Activated CD8-positive, alpha-beta T cell treated with anti-CD3 and anti-CD28 coated beads, Interleukin-2, amount 10 ng/mL, durations not matched to agents 7 days and 5 days (primary cell): ENCODE measurements at regions of chr1 and their contacts with region 1.

Region 1: GRCh38 chr1:236759252-236759859 is 35.7 kb upstream of the MTR start:
- DNase-seq: peak; percentile 39
- ATAC-seq: peak; percentile 63
- H3K4me3 Mint-ChIP-seq: no peak overlapping the region
- H3K27ac Mint-ChIP-seq: no peak overlapping the region
- H3K4me1 Mint-ChIP-seq: peaks cover 1% of the 10 kb centered on the region
- H3K27me3 Mint-ChIP-seq: no peaks in the 10 kb centered on the region

Region 2: DNA sequence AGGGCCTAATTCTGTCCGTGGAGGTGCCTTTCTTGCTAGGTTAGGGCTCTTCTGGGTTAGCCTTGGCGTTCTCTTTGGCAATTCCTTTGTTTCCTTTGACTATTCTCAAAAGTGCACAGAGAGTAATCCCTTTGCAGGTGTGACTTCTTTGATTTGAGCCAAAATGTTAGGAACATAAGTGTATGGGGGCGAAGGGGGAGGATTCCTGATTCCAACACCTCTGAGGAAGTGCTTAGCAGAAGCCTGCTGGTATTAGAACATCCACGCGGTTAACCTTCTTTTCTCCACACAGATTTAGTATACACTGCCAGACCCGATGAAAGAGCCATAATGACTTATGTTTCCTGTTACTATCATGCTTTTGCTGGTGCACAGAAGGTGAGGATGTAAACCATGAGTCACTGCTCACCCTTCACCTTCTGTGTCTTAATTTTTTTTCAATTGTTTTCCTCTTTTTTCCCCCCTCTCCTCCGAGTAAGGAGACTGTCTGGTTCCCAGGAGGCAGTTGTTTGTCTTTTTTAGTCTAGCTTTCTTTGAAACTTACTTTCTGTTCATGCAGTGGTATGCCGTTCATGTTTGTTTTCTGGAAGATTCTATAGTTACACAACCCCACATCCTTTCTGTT is 25.1 kb before region 1 on chr1:
- CTCF ChIA-PET with region 1: interaction called, 10 read pairs
- POLR2A ChIA-PET with region 1: no interaction called
- DNase-seq: no peak
- ATAC-seq: no peak
- H3K4me3 Mint-ChIP-seq: no peak overlapping the region
- H3K27ac Mint-ChIP-seq: no peak overlapping the region
- H3K4me1 Mint-ChIP-seq: peaks cover 2% of the 10 kb centered on the region
- H3K27me3 Mint-ChIP-seq: peaks cover 4% of the 10 kb centered on the region

Region 3: GRCh38 chr1:236795035-236795756 is 35.8 kb after region 1 on chr1 and contains the start of gene MTR:
- CTCF ChIA-PET with region 1: interaction called, 17 read pairs
- POLR2A ChIA-PET with region 1: no interaction called
- DNase-seq: peak; percentile 98
- ATAC-seq: peak; percentile 97
- H3K4me3 Mint-ChIP-seq: peak within 1 kb of the TSS; percentile 85
- H3K27ac Mint-ChIP-seq: peak within 1 kb of the TSS; percentile 92
- H3K4me1 Mint-ChIP-seq: peaks cover 29% of the 10 kb centered on the region
- H3K27me3 Mint-ChIP-seq: peaks cover 8% of the 10 kb centered on the region
- total RNA-seq, gene MTR: 41.7 to 44.7 TPM

Region 4: GRCh38 chr1:236862615-236863211 is 103.4 kb after region 1 on chr1:
- CTCF ChIA-PET with region 1: interaction called, 20 read pairs
- POLR2A ChIA-PET with region 1: no interaction called
- DNase-seq: no peak
- ATAC-seq: no peak
- H3K4me3 Mint-ChIP-seq: no peak overlapping the region
- H3K27ac Mint-ChIP-seq: peak overlapping the region; percentile 17
- H3K4me1 Mint-ChIP-seq: peaks cover 23% of the 10 kb centered on the region
- H3K27me3 Mint-ChIP-seq: no peaks in the 10 kb centered on the region

Region 5: DNA sequence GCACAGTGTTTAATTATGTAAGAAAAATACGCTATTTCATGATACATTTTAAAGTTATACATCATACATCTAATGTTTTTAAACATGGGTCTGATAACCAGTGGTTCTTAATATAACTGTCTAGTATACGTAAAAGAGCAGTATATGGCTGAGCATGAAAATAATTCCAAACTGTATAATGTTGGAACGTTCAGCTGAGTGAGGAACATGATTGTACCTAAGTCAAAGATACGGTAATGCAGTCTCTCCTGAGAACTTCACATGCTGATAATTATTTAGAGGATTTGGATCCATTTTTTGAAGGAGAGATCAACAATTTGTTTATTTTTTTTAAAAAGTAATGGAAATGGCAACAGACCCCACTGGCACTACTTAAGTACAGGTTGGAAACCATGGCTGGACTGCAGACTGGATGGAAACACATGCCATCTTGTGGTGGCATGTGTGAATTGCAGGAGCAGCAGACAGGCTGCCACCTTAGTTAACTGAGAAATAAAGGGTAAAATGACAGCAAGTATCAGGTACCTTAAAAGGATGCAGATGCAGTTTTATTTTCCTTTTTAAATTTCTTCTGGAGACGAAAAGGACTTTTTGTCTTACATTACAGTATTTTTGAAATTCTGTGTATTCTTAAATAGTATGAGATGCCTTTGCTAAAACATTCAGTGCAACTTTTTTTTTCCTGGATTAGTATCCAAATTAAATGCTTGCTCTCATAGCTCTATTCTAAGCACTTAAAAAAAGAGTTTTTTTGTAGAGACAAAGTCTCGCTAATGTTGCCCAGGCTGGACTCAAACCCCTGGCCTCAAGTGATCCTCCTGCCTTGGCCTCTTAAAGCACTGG is 109.5 kb after region 1 on chr1:
- CTCF ChIA-PET with region 1: interaction called, 32 read pairs
- POLR2A ChIA-PET with region 1: no interaction called
- DNase-seq: peak; percentile 56
- ATAC-seq: peak; percentile 63
- H3K4me3 Mint-ChIP-seq: no peak overlapping the region
- H3K27ac Mint-ChIP-seq: no peak overlapping the region
- H3K4me1 Mint-ChIP-seq: no peaks in the 10 kb centered on the region
- H3K27me3 Mint-ChIP-seq: no peaks in the 10 kb centered on the region

Region 6: GRCh38 chr1:236875975-236876374 is 116.6 kb after region 1 on chr1:
- CTCF ChIA-PET with region 1: interaction called, 32 read pairs
- POLR2A ChIA-PET with region 1: no interaction called
- DNase-seq: no peak
- ATAC-seq: no peak
- H3K4me3 Mint-ChIP-seq: no peak overlapping the region
- H3K27ac Mint-ChIP-seq: no peak overlapping the region
- H3K4me1 Mint-ChIP-seq: no peaks in the 10 kb centered on the region
- H3K27me3 Mint-ChIP-seq: no peaks in the 10 kb centered on the region

Region 7: DNA sequence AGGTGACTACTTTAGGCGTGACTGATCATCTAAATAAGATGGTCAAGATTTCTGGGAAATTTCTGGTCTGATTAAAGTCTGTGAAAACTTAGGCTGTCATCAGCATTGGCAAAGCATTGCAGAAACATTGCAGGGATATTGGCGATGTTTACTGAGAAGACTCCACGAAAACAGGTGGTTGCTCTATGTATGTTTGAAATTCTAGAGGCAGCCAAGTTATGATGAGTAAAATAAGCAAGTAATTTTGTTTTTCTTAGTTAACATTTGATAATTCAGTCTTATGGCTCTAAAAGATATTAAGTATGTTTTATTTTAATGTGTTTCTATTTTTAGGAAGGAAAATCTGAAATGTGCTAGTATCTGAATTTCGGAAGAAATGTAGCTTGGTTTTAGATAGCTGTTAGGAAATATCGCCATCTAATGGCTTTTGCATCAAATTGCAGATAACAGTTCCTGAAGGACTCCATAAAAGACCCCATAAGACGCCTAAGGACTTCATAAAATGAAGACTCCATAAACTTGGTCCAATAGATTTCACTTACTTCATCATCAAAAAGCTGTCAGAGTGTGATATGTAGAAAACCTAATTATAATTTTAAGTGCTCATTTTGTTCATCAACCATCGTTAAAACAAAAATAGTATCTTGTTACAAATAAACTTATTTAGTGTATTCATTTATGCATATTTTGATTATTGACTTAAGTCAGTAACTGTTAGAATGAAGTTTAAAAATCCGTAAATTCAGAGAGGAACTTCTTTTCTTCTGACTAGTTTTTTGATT is 627.2 kb after region 1 on chr1:
- CTCF ChIA-PET with region 1: interaction called, 19 read pairs
- POLR2A ChIA-PET with region 1: no interaction called
- DNase-seq: no peak
- ATAC-seq: no peak
- H3K4me3 Mint-ChIP-seq: no peak overlapping the region
- H3K27ac Mint-ChIP-seq: no peak overlapping the region
- H3K4me1 Mint-ChIP-seq: no peaks in the 10 kb centered on the region
- H3K27me3 Mint-ChIP-seq: no peaks in the 10 kb centered on the region